Activated T-helper 2 cell treated with anti-CD3 and anti-CD28 coated beads, Interferon-gamma antibody, Interleukin-2, Interleukin-4, amounts not matched to agents 10 μg/mL and 5 μg/mL and 100 μg/mL, durations not matched to agents 14 hours and 24 hours and 36 hours (primary cell): ENCODE measurements at regions of chr10 and their contacts with region 1.

Region 1: DNA sequence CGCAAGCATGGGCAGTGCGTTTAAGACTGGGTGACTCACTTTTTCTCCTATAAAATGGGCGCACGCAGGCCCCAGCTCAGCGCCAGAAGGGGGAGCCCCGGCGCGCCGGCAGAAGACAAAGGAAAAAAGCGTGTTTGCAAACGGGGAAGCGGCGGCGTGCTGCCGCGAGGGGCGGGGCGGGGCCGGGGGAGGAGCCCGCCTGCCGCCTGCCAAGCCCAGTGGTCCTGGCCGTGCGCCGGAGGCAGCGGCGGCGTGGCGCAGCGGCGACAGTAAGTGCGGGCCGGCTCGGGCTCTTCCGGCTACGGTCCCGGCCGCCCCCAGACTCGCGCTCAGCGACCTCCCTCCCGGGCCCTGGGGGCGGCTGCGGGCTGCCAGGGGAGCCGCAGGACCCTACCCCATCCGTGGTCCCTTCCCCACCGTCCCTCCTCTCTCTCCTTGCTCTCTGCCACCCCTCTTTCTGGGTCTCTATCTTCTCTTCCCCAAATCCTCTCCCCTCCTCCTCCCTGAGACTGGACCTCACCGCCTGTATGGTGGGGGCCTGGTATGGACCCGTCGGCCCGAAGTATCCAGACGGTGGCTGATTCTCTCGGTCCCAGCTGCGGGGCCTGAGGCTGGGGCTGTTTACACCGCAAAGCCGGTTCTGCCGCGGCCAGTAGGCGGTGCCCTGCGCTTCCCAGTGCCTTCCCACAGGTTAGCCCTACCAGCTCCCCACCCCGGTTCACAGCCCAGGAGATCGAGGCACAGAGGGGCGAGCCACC is at the start of gene SLC29A3:
- DNase-seq: peak; percentile 86
- H3K4me3 Mint-ChIP-seq: peak within 1 kb of the TSS; percentile 99
- H3K27ac Mint-ChIP-seq: peak within 1 kb of the TSS; percentile 91
- H3K4me1 Mint-ChIP-seq: peaks cover 39% of the 10 kb centered on the region
- H3K27me3 Mint-ChIP-seq: no peaks in the 10 kb centered on the region
- total RNA-seq, gene SLC29A3: 7.2 and 7.3 TPM in 2 replicates

Region 2: DNA sequence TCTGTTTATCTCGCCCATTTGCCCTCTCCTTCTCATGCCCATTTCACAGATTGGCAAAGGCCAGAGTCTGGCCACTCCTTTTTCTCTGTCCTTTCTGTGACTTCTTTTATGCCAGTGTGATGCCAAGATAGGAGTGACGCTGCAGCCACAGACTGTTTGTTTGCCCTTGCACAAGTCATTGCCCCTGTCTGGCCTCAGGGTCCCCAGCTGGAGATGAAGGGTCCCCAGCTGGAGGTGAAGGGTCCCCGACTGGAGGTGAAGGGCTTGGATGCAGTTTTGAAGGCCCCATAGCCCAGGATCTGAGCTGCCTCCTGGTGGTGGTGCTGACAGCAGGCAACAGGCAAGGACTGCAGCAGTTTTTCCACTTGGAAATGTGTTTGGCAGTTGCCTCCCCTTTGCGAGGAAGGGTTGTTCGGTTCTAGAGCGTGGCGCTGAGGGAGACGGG is 51.0 kb before region 1 on chr10:
- intact Hi-C with region 1: no loop called
- DNase-seq: no peak
- H3K4me3 Mint-ChIP-seq: no peak overlapping the region
- H3K27ac Mint-ChIP-seq: no peak overlapping the region
- H3K4me1 Mint-ChIP-seq: no peaks in the 10 kb centered on the region
- H3K27me3 Mint-ChIP-seq: no peaks in the 10 kb centered on the region

Region 3: GRCh38 chr10:71372882-71373495 is 53.8 kb after region 1 on chr10:
- intact Hi-C with region 1: loop called (anchors 1 kb)
- DNase-seq: no peak
- H3K4me3 Mint-ChIP-seq: no peak overlapping the region
- H3K27ac Mint-ChIP-seq: no peak overlapping the region
- H3K4me1 Mint-ChIP-seq: peaks cover 11% of the 10 kb centered on the region
- H3K27me3 Mint-ChIP-seq: peaks cover 8% of the 10 kb centered on the region

Region 4: GRCh38 chr10:71608819-71609768 is 289.9 kb after region 1 on chr10:
- intact Hi-C with region 1: loop called (anchors 5 kb)
- DNase-seq: peak; percentile 34
- H3K4me3 Mint-ChIP-seq: no peak overlapping the region
- H3K27ac Mint-ChIP-seq: no peak overlapping the region
- H3K4me1 Mint-ChIP-seq: peaks cover 15% of the 10 kb centered on the region
- H3K27me3 Mint-ChIP-seq: peaks cover 3% of the 10 kb centered on the region

Region 5: DNA sequence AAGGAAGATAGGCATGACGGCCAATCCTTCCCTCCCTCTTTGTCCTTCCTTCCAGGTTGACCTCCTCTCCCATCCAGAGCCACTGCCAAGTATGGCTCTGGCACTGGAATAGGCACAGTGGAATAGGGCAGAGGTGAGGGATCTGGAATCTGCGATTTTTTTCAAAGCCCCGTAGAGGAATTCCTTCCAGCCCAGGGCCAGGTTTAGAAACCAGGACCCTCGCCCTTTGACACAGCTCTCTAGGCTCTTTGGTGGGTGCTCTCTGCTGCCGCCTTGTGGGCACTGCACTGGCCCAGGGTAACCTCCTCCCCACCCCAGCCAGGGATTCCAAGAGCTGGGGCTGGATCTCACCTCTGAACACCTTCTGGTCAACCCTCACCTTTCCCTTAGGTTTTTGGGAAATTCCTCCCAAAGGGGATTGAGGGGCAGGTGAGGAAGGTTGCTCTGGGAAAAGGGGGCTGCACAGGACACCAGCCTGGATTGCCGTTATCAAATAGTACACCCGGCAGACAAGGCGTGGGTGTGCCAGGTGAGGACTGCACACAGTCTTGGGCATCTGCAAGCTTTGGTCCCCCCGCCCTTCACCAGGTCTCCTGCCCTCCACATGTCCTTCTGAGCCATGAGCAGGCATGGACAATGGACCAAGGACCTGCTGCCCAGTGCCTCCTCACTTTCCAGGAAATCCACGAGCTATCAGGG is 377.6 kb after region 1 on chr10:
- intact Hi-C with region 1: loop called (anchors 5 kb)
- DNase-seq: peak; percentile 48
- H3K4me3 Mint-ChIP-seq: no peak overlapping the region
- H3K27ac Mint-ChIP-seq: no peak overlapping the region
- H3K4me1 Mint-ChIP-seq: peaks cover 28% of the 10 kb centered on the region
- H3K27me3 Mint-ChIP-seq: no peaks in the 10 kb centered on the region

Region 6: GRCh38 chr10:71713135-71714030 is 394.2 kb after region 1 on chr10:
- intact Hi-C with region 1: loop called (anchors 5 kb)
- DNase-seq: peak; percentile 28
- H3K4me3 Mint-ChIP-seq: peak overlapping the region; percentile 64
- H3K27ac Mint-ChIP-seq: peak overlapping the region; percentile 99
- H3K4me1 Mint-ChIP-seq: peaks cover 36% of the 10 kb centered on the region
- H3K27me3 Mint-ChIP-seq: no peaks in the 10 kb centered on the region

Region 7: GRCh38 chr10:71899665-71900412 is 580.6 kb after region 1 on chr10:
- intact Hi-C with region 1: loop called (anchors 5 kb)
- DNase-seq: no peak
- H3K4me3 Mint-ChIP-seq: no peak overlapping the region
- H3K27ac Mint-ChIP-seq: no peak overlapping the region
- H3K4me1 Mint-ChIP-seq: no peaks in the 10 kb centered on the region
- H3K27me3 Mint-ChIP-seq: peaks cover 2% of the 10 kb centered on the region